HepG2 (cell line): ENCODE measurements at regions of chr17 and their contacts with region 1.

Region 1: DNA sequence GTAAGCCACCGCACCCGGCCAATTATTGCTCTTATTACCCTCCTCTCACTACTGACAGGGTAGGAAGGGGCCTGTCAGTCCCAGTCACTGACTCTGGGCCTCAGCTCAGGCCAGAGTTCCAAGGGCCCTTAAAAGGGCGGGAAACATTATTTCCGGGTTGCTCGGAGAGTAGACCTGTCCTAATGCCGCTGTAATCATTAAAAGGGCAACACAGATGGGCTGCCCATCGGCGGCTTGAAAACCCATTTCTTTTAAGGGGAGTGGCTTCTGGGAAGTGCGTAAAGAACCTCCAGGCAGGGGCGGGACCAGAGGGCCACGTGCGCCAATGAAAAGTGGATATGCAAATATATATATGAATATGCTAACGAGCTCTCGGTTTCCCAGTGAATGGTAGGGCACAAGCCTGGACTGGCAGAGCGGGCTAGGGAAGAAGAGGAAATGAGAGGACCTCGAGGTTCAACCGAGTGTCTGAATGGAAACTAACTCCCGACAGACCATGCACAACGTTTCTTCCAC is 26.6 kb downstream of the PIPOX start:
- DNase-seq: no peak
- ATAC-seq: no peak
- H3K4me3 ChIP-seq: no peak overlapping the region
- H3K27ac ChIP-seq: no peak overlapping the region
- H3K4me1 ChIP-seq: no peaks in the 10 kb centered on the region
- H3K27me3 ChIP-seq: no peaks in the 10 kb centered on the region
- CTCF ChIP-seq: no peak
- EP300 ChIP-seq: no peak
- POLR2A ChIP-seq: no peak
- RAD21 ChIP-seq: no peak

Region 2: GRCh38 chr17:29095414-29095813 is 25.8 kb after region 1 on chr17:
- CTCF ChIA-PET with region 1: no interaction called
- POLR2A ChIA-PET with region 1: no interaction called
- in situ Hi-C with region 1: no loop called
- intact Hi-C with region 1: loop called (anchors 1 kb)
- DNase-seq: no peak
- ATAC-seq: no peak
- H3K4me3 ChIP-seq: no peak overlapping the region
- H3K27ac ChIP-seq: no peak overlapping the region
- H3K4me1 ChIP-seq: no peaks in the 10 kb centered on the region
- H3K27me3 ChIP-seq: no peaks in the 10 kb centered on the region
- CTCF ChIP-seq: no peak
- EP300 ChIP-seq: no peak
- POLR2A ChIP-seq: no peak
- RAD21 ChIP-seq: no peak